Panc1 (cell line): ENCODE measurements at regions of chr2 and their contacts with region 1.

Region 1: GRCh38 chr2:97796465-97797126 is 83.2 kb downstream of the ZAP70 start:
- DNase-seq: no peak
- ATAC-seq: no peak
- H3K4me3 ChIP-seq: no peak overlapping the region
- H3K27ac ChIP-seq: no peak overlapping the region
- H3K4me1 ChIP-seq: no peaks in the 10 kb centered on the region
- H3K27me3 ChIP-seq: no peaks in the 10 kb centered on the region
- CTCF ChIP-seq: no peak

Region 2: GRCh38 chr2:97770450-97770849 is 26.1 kb before region 1 on chr2:
- CTCF ChIA-PET with region 1: no interaction called
- POLR2A ChIA-PET with region 1: no interaction called
- in situ Hi-C with region 1: no loop called
- intact Hi-C with region 1: loop called (anchors 1 kb)
- DNase-seq: no peak
- ATAC-seq: no peak
- H3K4me3 ChIP-seq: no peak overlapping the region
- H3K27ac ChIP-seq: no peak overlapping the region
- H3K4me1 ChIP-seq: no peaks in the 10 kb centered on the region
- H3K27me3 ChIP-seq: no peaks in the 10 kb centered on the region
- CTCF ChIP-seq: no peak

Region 3: GRCh38 chr2:98014379-98014778 is 217.8 kb after region 1 on chr2:
- CTCF ChIA-PET with region 1: interaction called, 16 read pairs
- POLR2A ChIA-PET with region 1: no interaction called
- in situ Hi-C with region 1: no loop called
- intact Hi-C with region 1: no loop called
- DNase-seq: no peak
- ATAC-seq: no peak
- H3K4me3 ChIP-seq: no peak overlapping the region
- H3K27ac ChIP-seq: no peak overlapping the region
- H3K4me1 ChIP-seq: no peaks in the 10 kb centered on the region
- H3K27me3 ChIP-seq: no peaks in the 10 kb centered on the region
- CTCF ChIP-seq: no peak